Thyroid gland (tissue), 4 donors: ENCODE measurements at regions of chr1 and their contacts with region 1.

Region 1: GRCh38 chr1:24289937-24290595 is 29.1 kb upstream of the GRHL3 start:
- DNase-seq: peak; percentile 99 to 100
- H3K4me3 ChIP-seq: no peak overlapping the region
- H3K27ac ChIP-seq: peak overlapping the region in 1 of 3 donors; percentile 24
- H3K4me1 ChIP-seq: peaks cover 7 to 38% of the 10 kb centered on the region in 2 donors
- H3K27me3 ChIP-seq: no peaks in the 10 kb centered on the region
- CTCF ChIP-seq: no peak
- POLR2A ChIP-seq: no peak

Region 2: DNA sequence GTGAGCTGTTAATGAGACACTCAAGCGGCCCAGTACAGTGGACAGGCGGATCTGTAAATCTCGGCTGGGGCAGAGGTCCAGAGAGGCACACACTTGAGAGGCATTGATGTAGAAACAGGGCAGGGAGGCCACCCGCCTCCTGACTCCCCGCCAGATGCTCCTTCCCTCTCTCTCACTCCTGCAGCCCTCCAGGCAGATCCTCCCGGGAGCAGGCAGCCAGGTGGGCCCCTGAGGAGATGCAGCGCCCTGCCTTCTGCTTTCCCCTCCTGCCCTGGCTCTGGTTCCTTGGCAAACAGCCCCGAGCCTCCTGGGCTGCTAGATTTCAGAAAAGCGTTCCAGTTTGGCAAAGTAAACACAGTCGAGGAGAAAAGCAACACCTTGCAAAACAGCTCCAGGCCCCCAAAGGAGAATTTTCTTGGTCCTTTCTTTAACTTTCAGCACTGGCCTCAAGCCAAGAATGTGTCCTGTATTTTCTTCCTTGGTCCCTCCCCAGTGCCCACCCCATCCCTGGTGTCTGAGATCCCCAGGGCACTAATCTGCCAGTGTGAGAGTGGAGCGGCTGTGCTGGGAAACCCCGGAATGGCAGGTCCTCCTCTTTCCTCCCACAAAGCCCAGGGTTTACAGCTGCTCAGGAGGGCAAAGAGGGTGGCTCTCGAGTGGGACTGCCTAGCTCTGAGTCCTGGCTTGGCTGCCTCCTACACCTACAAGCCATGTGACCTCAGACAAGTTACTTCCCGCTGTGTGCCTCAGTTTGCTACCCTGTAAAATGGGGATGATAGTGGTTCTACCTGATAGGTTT is 73.6 kb before region 1 on chr1:
- intact Hi-C with region 1: loop called (anchors 5 kb)
- DNase-seq: peak; percentile 96 to 98
- H3K4me3 ChIP-seq: no peak overlapping the region
- H3K27ac ChIP-seq: peak overlapping the region in 1 of 3 donors; percentile 71
- H3K4me1 ChIP-seq: peaks cover 13 to 22% of the 10 kb centered on the region in 2 donors
- H3K27me3 ChIP-seq: no peaks in the 10 kb centered on the region
- CTCF ChIP-seq: no peak
- POLR2A ChIP-seq: no peak